Activated CD8-positive, alpha-beta T cell treated with anti-CD3 and anti-CD28 coated beads, Interleukin-2, amount 10 ng/mL, durations not matched to agents 7 days and 5 days (primary cell): ENCODE measurements at regions of chr3 and their contacts with region 1.

Region 1: GRCh38 chr3:69200384-69201068 is 78.1 kb upstream of the LMOD3 start:
- DNase-seq: peak; percentile 59
- ATAC-seq: peak; percentile 31
- H3K4me3 Mint-ChIP-seq: peak overlapping the region; percentile 77
- H3K27ac Mint-ChIP-seq: peak overlapping the region; percentile 82
- H3K4me1 Mint-ChIP-seq: peaks cover 80% of the 10 kb centered on the region
- H3K27me3 Mint-ChIP-seq: no peaks in the 10 kb centered on the region

Region 2: GRCh38 chr3:69072928-69073327 is 127.6 kb before region 1 on chr3:
- CTCF ChIA-PET with region 1: no interaction called
- POLR2A ChIA-PET with region 1: no interaction called
- DNase-seq: no peak
- ATAC-seq: no peak
- H3K4me3 Mint-ChIP-seq: no peak overlapping the region
- H3K27ac Mint-ChIP-seq: no peak overlapping the region
- H3K4me1 Mint-ChIP-seq: peaks cover 46% of the 10 kb centered on the region
- H3K27me3 Mint-ChIP-seq: no peaks in the 10 kb centered on the region

Region 3: DNA sequence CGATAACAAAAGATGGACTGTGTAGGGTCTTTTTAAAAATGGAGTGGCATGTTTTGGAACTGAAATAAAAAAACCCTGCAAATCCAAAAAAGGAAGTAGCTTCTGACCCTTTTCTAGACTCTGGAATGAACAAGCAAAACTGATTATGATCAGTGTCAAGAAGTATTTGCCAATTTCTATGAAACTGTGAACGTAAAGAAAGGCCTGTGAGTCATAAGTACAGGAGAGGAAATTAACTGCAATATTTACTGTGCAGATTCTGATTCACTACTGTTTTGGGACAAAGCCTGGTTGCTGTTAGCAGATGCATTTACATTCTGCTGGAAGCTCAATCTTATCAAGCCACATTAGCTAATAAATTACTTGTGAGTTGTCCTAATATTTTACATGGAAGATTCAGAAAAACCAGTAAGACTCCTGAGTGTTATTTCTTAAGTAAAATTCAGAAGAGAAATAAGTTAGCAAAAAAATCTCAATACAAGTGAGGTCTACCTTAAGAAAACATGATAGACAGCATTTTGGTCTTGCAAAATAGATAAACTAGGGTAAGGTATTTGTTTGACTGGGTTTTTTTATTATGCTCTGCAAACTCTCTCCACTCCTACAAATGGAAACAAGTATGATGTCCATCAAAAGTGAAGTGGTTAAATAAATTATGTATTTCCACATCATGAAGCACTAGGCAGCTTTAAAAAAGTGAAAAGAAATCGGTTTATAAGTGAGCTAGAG is 12.0 kb after region 1 on chr3:
- CTCF ChIA-PET with region 1: interaction called, 13 read pairs
- POLR2A ChIA-PET with region 1: interaction called, 21 read pairs
- DNase-seq: no peak
- ATAC-seq: peak; percentile 88
- H3K4me3 Mint-ChIP-seq: peak overlapping the region; percentile 24
- H3K27ac Mint-ChIP-seq: peak overlapping the region; percentile 79
- H3K4me1 Mint-ChIP-seq: peaks cover 52% of the 10 kb centered on the region
- H3K27me3 Mint-ChIP-seq: no peaks in the 10 kb centered on the region